Naive thymus-derived CD4-positive, alpha-beta T cell (primary cell): ENCODE measurements at regions of chr1 and their contacts with region 1.

Region 1: DNA sequence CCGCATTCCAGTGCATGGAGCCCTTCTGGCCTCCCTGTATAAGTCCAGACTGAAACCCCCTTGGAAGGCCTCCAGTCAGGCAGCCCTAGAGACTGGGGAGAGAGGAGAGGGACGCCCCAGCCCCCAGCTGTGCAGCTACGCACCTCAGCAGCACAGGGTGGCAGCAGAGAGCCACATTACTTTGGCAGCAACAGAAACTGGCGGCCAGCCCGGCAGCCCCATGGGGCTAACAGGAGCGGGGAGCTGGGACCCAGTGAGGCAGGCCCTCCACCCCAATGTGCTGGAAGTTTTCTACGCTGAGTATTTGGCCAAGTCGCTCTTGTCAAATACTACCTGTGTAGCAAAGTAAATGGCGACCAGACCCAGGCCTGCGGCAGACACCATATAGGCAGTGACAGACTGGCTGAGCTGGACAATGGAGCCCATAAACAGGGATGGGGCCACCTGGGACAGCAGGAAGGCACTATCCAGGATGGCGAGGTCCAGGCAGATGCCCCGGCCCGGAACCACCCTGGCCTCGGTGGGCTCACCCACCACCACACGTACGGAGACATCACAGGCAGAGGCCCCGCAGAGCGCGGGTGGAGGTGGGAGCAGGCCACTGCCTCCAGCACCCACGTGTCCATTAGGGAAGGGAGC is 21.2 kb downstream of the SLC45A3 start:
- DNase-seq: peak; percentile 39 to 76 (median 65)
- ATAC-seq: peak; percentile 91
- H3K4me3 ChIP-seq: no peak overlapping the region
- H3K4me3 Mint-ChIP-seq: no peak overlapping the region
- H3K27ac ChIP-seq: no peak overlapping the region
- H3K27ac Mint-ChIP-seq: peak overlapping the region in 1 of 9 donors; percentile 50
- H3K4me1 ChIP-seq: no peaks in the 10 kb centered on the region
- H3K4me1 Mint-ChIP-seq: peaks cover 0 to 9% (median 0%) of the 10 kb centered on the region in 7 donors
- H3K27me3 ChIP-seq: no peaks in the 10 kb centered on the region
- H3K27me3 Mint-ChIP-seq: peaks cover 0 to 5% (median 0%) of the 10 kb centered on the region in 5 donors

Region 2: DNA sequence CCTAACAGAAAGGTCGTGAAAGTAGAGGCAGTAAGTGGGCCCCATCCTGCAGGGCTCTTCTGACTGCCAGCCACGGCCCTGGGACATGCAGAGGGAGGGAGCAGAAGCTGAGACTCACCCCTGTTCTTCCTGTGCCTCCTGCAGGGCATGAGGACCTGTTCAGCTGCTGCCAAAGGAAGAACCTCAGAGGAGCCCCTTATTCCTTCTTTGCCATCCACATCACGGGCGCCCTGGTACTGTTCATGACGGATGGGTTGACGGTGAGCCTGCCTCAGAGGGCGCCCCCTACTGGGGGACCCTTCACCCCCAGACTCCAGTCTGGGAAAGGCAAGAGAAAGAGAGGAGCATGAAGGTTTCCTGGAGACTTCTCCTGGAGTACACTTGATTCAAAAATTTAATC is 74.3 kb before region 1 on chr1:
- CTCF ChIA-PET with region 1: interaction called, 315 read pairs
- POLR2A ChIA-PET with region 1: no interaction called
- intact Hi-C with region 1: no loop called
- DNase-seq: no peak
- ATAC-seq: no peak
- H3K4me3 ChIP-seq: no peak overlapping the region
- H3K4me3 Mint-ChIP-seq: no peak overlapping the region
- H3K27ac ChIP-seq: no peak overlapping the region
- H3K27ac Mint-ChIP-seq: no peak overlapping the region
- H3K4me1 ChIP-seq: no peaks in the 10 kb centered on the region
- H3K4me1 Mint-ChIP-seq: peaks cover 0 to 7% (median 4%) of the 10 kb centered on the region in 7 donors
- H3K27me3 ChIP-seq: no peaks in the 10 kb centered on the region
- H3K27me3 Mint-ChIP-seq: peaks cover 0 to 11% (median 0%) of the 10 kb centered on the region in 5 donors

Region 3: GRCh38 chr1:205750138-205751035 is 91.3 kb after region 1 on chr1 and contains the start of gene NUCKS1:
- CTCF ChIA-PET with region 1: no interaction called
- POLR2A ChIA-PET with region 1: no interaction called
- intact Hi-C with region 1: loop called in 1 of 2 experiments (anchors 1 kb)
- DNase-seq: peak; percentile 79 to 99 (median 97)
- ATAC-seq: peak; percentile 86
- H3K4me3 ChIP-seq: peak within 1 kb of the TSS; percentile 81
- H3K4me3 Mint-ChIP-seq: peak within 1 kb of the TSS; percentile 83 to 99 (median 96)
- H3K27ac ChIP-seq: peak within 1 kb of the TSS; percentile 95
- H3K27ac Mint-ChIP-seq: peak within 1 kb of the TSS; percentile 96 to 100 (median 98)
- H3K4me1 ChIP-seq: peaks cover 6 to 10% of the 10 kb centered on the region in 2 donors
- H3K4me1 Mint-ChIP-seq: peaks cover 24 to 49% (median 39%) of the 10 kb centered on the region in 7 donors
- H3K27me3 ChIP-seq: no peaks in the 10 kb centered on the region
- H3K27me3 Mint-ChIP-seq: peaks cover 0 to 3% (median 0%) of the 10 kb centered on the region in 5 donors
- total RNA-seq, gene NUCKS1: 70.4 to 164 (median 122) TPM

Region 4: GRCh38 chr1:205791568-205792180 is 132.6 kb after region 1 on chr1:
- CTCF ChIA-PET with region 1: interaction called, 24 read pairs
- POLR2A ChIA-PET with region 1: no interaction called
- intact Hi-C with region 1: no loop called
- DNase-seq: peak; percentile 28 to 68 (median 56)
- ATAC-seq: peak; percentile 93
- H3K4me3 ChIP-seq: no peak overlapping the region
- H3K4me3 Mint-ChIP-seq: no peak overlapping the region
- H3K27ac ChIP-seq: no peak overlapping the region
- H3K27ac Mint-ChIP-seq: peak overlapping the region in 1 of 9 donors; percentile 22
- H3K4me1 ChIP-seq: no peaks in the 10 kb centered on the region
- H3K4me1 Mint-ChIP-seq: peaks cover 0 to 5% (median 0%) of the 10 kb centered on the region in 7 donors
- H3K27me3 ChIP-seq: no peaks in the 10 kb centered on the region
- H3K27me3 Mint-ChIP-seq: no peaks in the 10 kb centered on the region

Region 5: GRCh38 chr1:205977402-205978014 is 318.4 kb after region 1 on chr1:
- CTCF ChIA-PET with region 1: interaction called, 83 read pairs
- POLR2A ChIA-PET with region 1: no interaction called
- intact Hi-C with region 1: loop called in 1 of 2 experiments (anchors 1 kb)
- DNase-seq: peak; percentile 45 to 78 (median 68)
- ATAC-seq: peak; percentile 82
- H3K4me3 ChIP-seq: no peak overlapping the region
- H3K4me3 Mint-ChIP-seq: no peak overlapping the region
- H3K27ac ChIP-seq: no peak overlapping the region
- H3K27ac Mint-ChIP-seq: no peak overlapping the region
- H3K4me1 ChIP-seq: no peaks in the 10 kb centered on the region
- H3K4me1 Mint-ChIP-seq: peaks cover 0 to 2% (median 0%) of the 10 kb centered on the region in 7 donors
- H3K27me3 ChIP-seq: no peaks in the 10 kb centered on the region
- H3K27me3 Mint-ChIP-seq: peaks cover 0 to 2% (median 0%) of the 10 kb centered on the region in 5 donors